ENCODE measurements at regions of chr19 and their contacts with region 1.

Region 1: GRCh38 chr19:49200238-49200862 is 42.8 kb downstream of the TRPM4 start:
- DNase-seq: peak in 1 of 6 donors; percentile 29
- ATAC-seq: peak in 1 of 4 donors; percentile 54
- H3K4me3 ChIP-seq: no peak overlapping the region
- H3K27ac ChIP-seq: no peak overlapping the region
- H3K4me1 ChIP-seq: no peaks in the 10 kb centered on the region
- H3K27me3 ChIP-seq: no peaks in the 10 kb centered on the region
- CTCF ChIP-seq: no peak

Region 2: GRCh38 chr19:49042177-49042576 is 158.2 kb before region 1 on chr19:
- intact Hi-C with region 1: no loop called
- DNase-seq: no peak
- ATAC-seq: no peak
- H3K4me3 ChIP-seq: no peak overlapping the region
- H3K27ac ChIP-seq: no peak overlapping the region
- H3K4me1 ChIP-seq: no peaks in the 10 kb centered on the region
- H3K27me3 ChIP-seq: no peaks in the 10 kb centered on the region
- CTCF ChIP-seq: no peak

Region 3: GRCh38 chr19:49094505-49095482 is 105.6 kb before region 1 on chr19:
- intact Hi-C with region 1: loop called in 1 of 3 experiments (anchors 5 kb)
- DNase-seq: no peak
- ATAC-seq: no peak
- H3K4me3 ChIP-seq: no peak overlapping the region
- H3K27ac ChIP-seq: no peak overlapping the region
- H3K4me1 ChIP-seq: no peaks in the 10 kb centered on the region
- H3K27me3 ChIP-seq: no peaks in the 10 kb centered on the region
- CTCF ChIP-seq: no peak

Region 4: DNA sequence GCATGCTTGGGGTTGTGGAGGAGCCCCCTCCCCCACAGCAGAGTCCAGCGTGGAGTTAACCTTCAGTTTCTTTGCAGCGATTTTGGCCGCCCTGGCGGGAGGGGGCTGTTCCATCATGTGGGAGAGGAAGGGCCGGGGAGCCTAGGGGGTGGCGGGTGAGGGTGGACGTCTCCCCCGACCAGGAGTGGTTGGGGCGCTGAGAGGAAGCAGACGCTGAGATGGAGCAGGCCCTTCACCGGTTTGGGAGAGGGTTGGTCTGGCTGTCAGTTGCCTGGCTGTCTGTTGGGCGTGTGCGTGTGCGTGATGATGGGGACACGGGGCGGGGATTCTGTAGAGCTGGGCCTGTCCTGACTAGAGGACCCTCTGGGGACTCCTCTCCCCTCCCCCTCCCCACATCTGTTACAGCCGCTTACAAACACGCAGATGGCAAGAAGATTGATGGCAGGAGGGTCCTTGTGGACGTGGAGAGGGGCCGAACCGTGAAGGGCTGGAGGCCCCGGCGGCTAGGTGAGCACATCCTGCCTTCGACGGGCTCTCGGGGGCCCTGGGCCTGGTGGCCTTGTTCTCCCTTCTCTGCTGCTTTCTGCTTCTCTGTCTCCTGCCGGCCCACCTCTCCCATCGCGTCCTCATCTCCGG is 96.0 kb before region 1 on chr19:
- intact Hi-C with region 1: loop called in 1 of 3 experiments (anchors 5 kb)
- DNase-seq: no peak
- ATAC-seq: no peak
- H3K4me3 ChIP-seq: no peak overlapping the region
- H3K27ac ChIP-seq: no peak overlapping the region
- H3K4me1 ChIP-seq: no peaks in the 10 kb centered on the region
- H3K27me3 ChIP-seq: no peaks in the 10 kb centered on the region
- CTCF ChIP-seq: no peak

Region 5: GRCh38 chr19:49255674-49256073 is 55.3 kb after region 1 on chr19:
- intact Hi-C with region 1: no loop called
- DNase-seq: no peak
- ATAC-seq: no peak
- H3K4me3 ChIP-seq: no peak overlapping the region
- H3K27ac ChIP-seq: no peak overlapping the region
- H3K4me1 ChIP-seq: no peaks in the 10 kb centered on the region
- H3K27me3 ChIP-seq: no peaks in the 10 kb centered on the region
- CTCF ChIP-seq: no peak

Region 6: GRCh38 chr19:49301165-49301865 is 101.0 kb after region 1 on chr19:
- intact Hi-C with region 1: no loop called
- DNase-seq: peak; percentile 25 to 90 (median 67)
- ATAC-seq: peak; percentile 85 to 98 (median 88)
- H3K4me3 ChIP-seq: no peak overlapping the region
- H3K27ac ChIP-seq: no peak overlapping the region
- H3K4me1 ChIP-seq: no peaks in the 10 kb centered on the region
- H3K27me3 ChIP-seq: no peaks in the 10 kb centered on the region
- CTCF ChIP-seq: peak; percentile 68 to 82 (median 72)

Region 7: GRCh38 chr19:49315111-49315510 is 114.8 kb after region 1 on chr19:
- intact Hi-C with region 1: no loop called
- DNase-seq: no peak
- ATAC-seq: no peak
- H3K4me3 ChIP-seq: no peak overlapping the region
- H3K27ac ChIP-seq: no peak overlapping the region
- H3K4me1 ChIP-seq: peaks cover 0 to 6% (median 0%) of the 10 kb centered on the region in 3 donors
- H3K27me3 ChIP-seq: no peaks in the 10 kb centered on the region
- CTCF ChIP-seq: no peak

Measured in pancreas (tissue), 10 donors.